ENCODE measurements at regions of chr10 and their contacts with region 1.

Region 1: GRCh38 chr10:48336978-48337599 is 30.6 kb downstream of the MAPK8 start:
- DNase-seq: no peak
- ATAC-seq: no peak
- H3K4me3 ChIP-seq: no peak overlapping the region
- H3K27ac ChIP-seq: no peak overlapping the region
- H3K4me1 ChIP-seq: peaks cover 30% of the 10 kb centered on the region
- H3K27me3 ChIP-seq: no peaks in the 10 kb centered on the region
- CTCF ChIP-seq: no peak

Region 2: GRCh38 chr10:46539596-46540411 is 1797.3 kb before region 1 on chr10:
- intact Hi-C with region 1: loop called in 1 of 2 experiments (anchors 5 kb)
- DNase-seq: peak in 1 of 2 donors; percentile 6
- ATAC-seq: no peak
- H3K4me3 ChIP-seq: no peak overlapping the region
- H3K27ac ChIP-seq: no peak overlapping the region
- H3K4me1 ChIP-seq: no peaks in the 10 kb centered on the region
- H3K27me3 ChIP-seq: peaks cover 0 to 63% (median 4%) of the 10 kb centered on the region in 3 donors
- CTCF ChIP-seq: no peak

Region 3: GRCh38 chr10:48314107-48314506 is 23.0 kb before region 1 on chr10:
- intact Hi-C with region 1: loop called in 1 of 2 experiments (anchors 2 kb)
- DNase-seq: no peak
- ATAC-seq: no peak
- H3K4me3 ChIP-seq: no peak overlapping the region
- H3K27ac ChIP-seq: no peak overlapping the region
- H3K4me1 ChIP-seq: peaks cover 40% of the 10 kb centered on the region
- H3K27me3 ChIP-seq: no peaks in the 10 kb centered on the region
- CTCF ChIP-seq: no peak

Region 4: GRCh38 chr10:48496831-48497779 is 160.0 kb after region 1 on chr10:
- intact Hi-C with region 1: no loop called
- DNase-seq: no peak
- ATAC-seq: no peak
- H3K4me3 ChIP-seq: no peak overlapping the region
- H3K27ac ChIP-seq: no peak overlapping the region
- H3K4me1 ChIP-seq: no peaks in the 10 kb centered on the region
- H3K27me3 ChIP-seq: no peaks in the 10 kb centered on the region
- CTCF ChIP-seq: no peak

Measured in psoas muscle (tissue), 8 donors.